CD4-positive, alpha-beta memory T cell (primary cell): ENCODE measurements at regions of chr19 and their contacts with region 1.

Region 1: DNA sequence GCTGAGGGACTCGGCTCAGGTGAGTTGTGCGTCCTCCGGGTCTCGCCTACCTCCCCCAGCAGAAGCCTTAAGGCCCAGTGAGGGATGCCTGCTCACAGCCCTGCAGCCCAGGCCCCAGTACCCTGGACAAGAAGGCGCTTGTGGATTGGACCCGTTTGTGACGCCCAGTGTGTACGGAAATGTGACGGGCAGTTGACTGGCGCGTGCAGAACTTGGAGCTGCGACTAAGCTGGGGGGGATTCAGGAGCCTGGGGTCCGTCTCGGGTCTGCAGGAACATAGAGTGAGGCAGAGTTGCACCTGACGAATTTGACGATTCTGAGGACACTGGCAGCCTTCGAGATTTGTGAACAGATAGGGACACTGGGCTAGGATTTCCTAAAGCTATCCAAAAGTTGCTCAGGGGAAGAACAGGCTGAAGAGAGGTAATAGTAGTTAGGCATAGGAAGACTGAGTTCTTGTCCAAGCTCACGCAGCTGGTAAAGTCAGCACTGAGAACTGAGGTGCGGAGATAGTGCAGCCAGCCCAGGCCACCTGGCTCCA is 519 bp downstream of the ZNF551 start:
- DNase-seq: no peak
- H3K4me3 ChIP-seq: peak overlapping the region; percentile 87 to 92
- H3K4me3 Mint-ChIP-seq: peak overlapping the region; percentile 96 to 99 (median 97)
- H3K27ac ChIP-seq: peak overlapping the region; percentile 54
- H3K27ac Mint-ChIP-seq: peak overlapping the region; percentile 91 to 99 (median 97)
- H3K4me1 ChIP-seq: peaks cover 18% of the 10 kb centered on the region
- H3K4me1 Mint-ChIP-seq: peaks cover 21 to 45% (median 38%) of the 10 kb centered on the region in 4 donors
- H3K27me3 ChIP-seq: no peaks in the 10 kb centered on the region
- H3K27me3 Mint-ChIP-seq: no peaks in the 10 kb centered on the region

Region 2: GRCh38 chr19:57719901-57720519 is 37.7 kb after region 1 on chr19:
- CTCF ChIA-PET with region 1: no interaction called
- POLR2A ChIA-PET with region 1: no interaction called
- intact Hi-C with region 1: loop called (anchors 5 kb)
- DNase-seq: no peak
- H3K4me3 ChIP-seq: no peak overlapping the region
- H3K4me3 Mint-ChIP-seq: no peak overlapping the region
- H3K27ac ChIP-seq: no peak overlapping the region
- H3K27ac Mint-ChIP-seq: no peak overlapping the region
- H3K4me1 ChIP-seq: no peaks in the 10 kb centered on the region
- H3K4me1 Mint-ChIP-seq: peaks cover 1 to 9% (median 5%) of the 10 kb centered on the region in 4 donors
- H3K27me3 ChIP-seq: no peaks in the 10 kb centered on the region
- H3K27me3 Mint-ChIP-seq: no peaks in the 10 kb centered on the region